ENCODE measurements at regions of chr2 and their contacts with region 1.

Region 1: GRCh38 chr2:224802407-224802806 is 86.2 kb upstream of the CCDC195 start:
- DNase-seq: no peak
- ATAC-seq: no peak
- H3K4me3 ChIP-seq: no peak overlapping the region
- H3K4me3 Mint-ChIP-seq: no peak overlapping the region
- H3K27ac ChIP-seq: no peak overlapping the region
- H3K27ac Mint-ChIP-seq: peak overlapping the region; percentile 10
- H3K4me1 ChIP-seq: no peaks in the 10 kb centered on the region
- H3K4me1 Mint-ChIP-seq: no peaks in the 10 kb centered on the region
- H3K27me3 ChIP-seq: no peaks in the 10 kb centered on the region
- H3K27me3 Mint-ChIP-seq: no peaks in the 10 kb centered on the region
- CTCF ChIP-seq: no peak

Region 2: GRCh38 chr2:224816816-224817215 is 14.4 kb after region 1 on chr2:
- CTCF ChIA-PET with region 1: no interaction called
- POLR2A ChIA-PET with region 1: no interaction called
- intact Hi-C with region 1: no loop called
- DNase-seq: no peak
- ATAC-seq: no peak
- H3K4me3 ChIP-seq: no peak overlapping the region
- H3K4me3 Mint-ChIP-seq: no peak overlapping the region
- H3K27ac ChIP-seq: no peak overlapping the region
- H3K27ac Mint-ChIP-seq: peak overlapping the region; percentile 35
- H3K4me1 ChIP-seq: no peaks in the 10 kb centered on the region
- H3K4me1 Mint-ChIP-seq: peaks cover 3% of the 10 kb centered on the region
- H3K27me3 ChIP-seq: no peaks in the 10 kb centered on the region
- H3K27me3 Mint-ChIP-seq: no peaks in the 10 kb centered on the region
- CTCF ChIP-seq: no peak

Region 3: DNA sequence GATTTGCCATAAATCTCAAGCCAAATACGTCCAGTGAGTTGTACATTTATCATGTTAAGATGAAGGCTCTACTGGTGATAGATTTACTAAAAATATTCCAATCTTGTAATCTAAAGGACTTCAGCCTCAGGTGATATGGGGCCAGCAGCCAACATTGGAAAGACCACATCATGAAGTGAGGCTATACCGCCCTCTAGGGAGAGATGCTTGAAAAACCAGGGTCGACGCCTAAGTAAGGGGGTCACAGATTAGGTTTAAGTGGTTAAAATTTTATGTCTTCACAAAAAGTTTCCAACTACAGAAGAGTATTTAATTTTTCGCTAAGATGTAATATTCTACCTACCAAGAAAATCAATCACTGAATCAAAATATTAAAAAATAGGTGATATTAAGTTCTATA is 206.5 kb after region 1 on chr2:
- CTCF ChIA-PET with region 1: no interaction called
- POLR2A ChIA-PET with region 1: no interaction called
- intact Hi-C with region 1: loop called in 1 of 2 experiments (anchors 2 kb)
- DNase-seq: peak in 3 of 9 experiments; percentile 25 to 60 (median 46)
- ATAC-seq: no peak
- H3K4me3 ChIP-seq: no peak overlapping the region
- H3K4me3 Mint-ChIP-seq: no peak overlapping the region
- H3K27ac ChIP-seq: no peak overlapping the region
- H3K27ac Mint-ChIP-seq: peak overlapping the region; percentile 82
- H3K4me1 ChIP-seq: peaks cover 47% of the 10 kb centered on the region
- H3K4me1 Mint-ChIP-seq: peaks cover 93% of the 10 kb centered on the region
- H3K27me3 ChIP-seq: no peaks in the 10 kb centered on the region
- H3K27me3 Mint-ChIP-seq: no peaks in the 10 kb centered on the region
- CTCF ChIP-seq: peak; percentile 46

Region 4: GRCh38 chr2:225650041-225650440 is 847.6 kb after region 1 on chr2:
- CTCF ChIA-PET with region 1: no interaction called
- POLR2A ChIA-PET with region 1: no interaction called
- intact Hi-C with region 1: loop called in 1 of 2 experiments (anchors 10 kb)
- DNase-seq: no peak
- ATAC-seq: no peak
- H3K4me3 ChIP-seq: no peak overlapping the region
- H3K4me3 Mint-ChIP-seq: no peak overlapping the region
- H3K27ac ChIP-seq: no peak overlapping the region
- H3K27ac Mint-ChIP-seq: no peak overlapping the region
- H3K4me1 ChIP-seq: no peaks in the 10 kb centered on the region
- H3K4me1 Mint-ChIP-seq: no peaks in the 10 kb centered on the region
- H3K27me3 ChIP-seq: no peaks in the 10 kb centered on the region
- H3K27me3 Mint-ChIP-seq: peaks cover 14% of the 10 kb centered on the region
- CTCF ChIP-seq: no peak

Measured in CD8-positive, alpha-beta T cell (primary cell).